Mucosa of descending colon (tissue), 3 donors: ENCODE measurements at regions of chr1 and their contacts with region 1.

Region 1: DNA sequence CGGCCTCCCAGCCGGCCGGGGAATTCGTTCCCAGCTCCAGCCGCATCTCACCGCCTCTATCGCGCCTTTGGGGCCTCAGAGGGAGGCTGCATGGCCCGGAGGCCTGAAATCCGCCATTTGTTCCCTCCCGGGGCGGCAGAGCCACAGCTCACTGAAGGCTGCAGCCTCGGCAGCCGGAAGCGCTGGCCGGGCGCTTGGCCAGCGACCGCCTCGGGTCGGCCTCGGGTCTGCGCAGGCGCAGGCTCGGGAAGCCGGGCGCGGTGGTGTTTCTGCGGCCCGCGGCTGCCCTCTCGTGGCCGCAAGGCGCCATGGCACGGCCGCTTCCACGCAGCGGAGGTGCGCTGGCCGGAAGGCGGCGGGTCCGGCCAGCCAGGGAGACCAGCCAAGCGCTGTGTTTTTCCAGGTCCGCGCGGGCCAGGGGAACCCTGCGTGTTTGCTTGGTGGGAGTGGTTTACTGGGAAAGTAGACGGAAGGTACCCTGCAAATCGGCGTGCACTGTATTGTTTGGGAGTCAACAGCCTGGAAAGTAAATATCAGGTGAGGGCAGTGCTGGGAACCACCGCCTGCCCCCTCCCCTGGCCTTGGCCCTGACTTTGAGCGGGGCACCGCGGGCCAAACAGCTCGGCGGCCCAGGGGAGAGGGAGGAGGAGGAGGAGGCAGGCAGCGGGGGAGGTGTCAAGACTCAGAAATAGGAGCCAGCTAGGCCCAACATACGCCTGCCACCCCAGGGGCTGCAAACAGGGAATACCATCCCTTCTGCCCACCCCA is 52.7 kb upstream of the CD34 start:
- DNase-seq: peak; percentile 91 to 96 (median 93)
- ATAC-seq: peak; percentile 97
- H3K4me3 ChIP-seq: peak overlapping the region; percentile 36
- H3K4me1 ChIP-seq: peaks cover 18% of the 10 kb centered on the region
- CTCF ChIP-seq: peak; percentile 100

Region 2: GRCh38 chr1:207828485-207829158 is 135.0 kb before region 1 on chr1:
- intact Hi-C with region 1: loop called in 1 of 2 experiments (anchors 5 kb)
- DNase-seq: peak; percentile 81 to 89 (median 89)
- ATAC-seq: peak; percentile 64
- H3K4me3 ChIP-seq: no peak overlapping the region
- H3K4me1 ChIP-seq: peaks cover 46% of the 10 kb centered on the region
- CTCF ChIP-seq: peak; percentile 78

Region 3: DNA sequence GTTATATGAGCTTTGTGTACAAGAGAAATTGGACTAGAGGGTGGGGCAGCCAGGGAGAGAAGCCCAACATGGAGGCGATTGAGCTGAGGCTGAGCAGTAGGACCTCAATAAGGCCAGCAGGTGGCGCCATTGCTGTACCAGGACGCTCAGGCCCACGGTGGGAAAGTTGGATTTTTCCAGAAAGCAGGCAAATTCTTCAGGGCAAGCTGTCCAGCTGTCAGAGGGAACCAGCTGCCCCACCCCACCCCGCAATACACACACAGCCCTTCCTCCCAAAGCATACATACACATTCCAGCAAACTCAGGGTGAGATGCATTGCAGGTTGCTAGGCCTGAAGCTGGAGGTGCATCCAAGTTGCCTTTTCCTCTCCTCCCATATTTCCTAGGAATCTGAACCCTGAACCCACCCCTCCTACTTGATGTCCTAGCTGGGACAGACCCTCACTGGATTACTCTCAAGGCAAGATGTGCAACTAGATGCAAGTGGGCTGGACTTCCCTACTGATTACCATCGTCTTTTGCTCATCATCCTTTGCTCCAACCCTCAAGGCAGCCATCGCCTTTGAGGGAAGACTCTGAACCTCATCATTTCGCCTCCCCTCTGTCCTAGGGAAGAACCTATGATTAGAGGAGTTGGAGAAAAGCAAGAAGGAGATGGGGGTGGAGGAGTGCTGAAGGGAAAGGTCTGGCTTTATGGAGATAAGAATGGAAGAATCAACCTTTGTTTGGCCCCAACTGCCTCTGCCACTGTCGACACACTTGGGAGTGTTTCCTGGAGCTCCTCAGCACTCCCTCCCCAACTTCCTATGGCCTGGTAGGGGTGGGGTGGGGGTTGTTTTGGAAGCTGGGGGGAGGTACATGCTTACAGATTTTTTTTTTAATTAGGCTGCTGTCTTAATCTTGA is 78.2 kb before region 1 on chr1:
- intact Hi-C with region 1: loop called in 1 of 2 experiments (anchors 5 kb)
- DNase-seq: peak; percentile 81 to 89 (median 83)
- ATAC-seq: peak; percentile 96
- H3K4me3 ChIP-seq: no peak overlapping the region
- H3K4me1 ChIP-seq: peaks cover 10% of the 10 kb centered on the region
- CTCF ChIP-seq: peak; percentile 91

Region 4: DNA sequence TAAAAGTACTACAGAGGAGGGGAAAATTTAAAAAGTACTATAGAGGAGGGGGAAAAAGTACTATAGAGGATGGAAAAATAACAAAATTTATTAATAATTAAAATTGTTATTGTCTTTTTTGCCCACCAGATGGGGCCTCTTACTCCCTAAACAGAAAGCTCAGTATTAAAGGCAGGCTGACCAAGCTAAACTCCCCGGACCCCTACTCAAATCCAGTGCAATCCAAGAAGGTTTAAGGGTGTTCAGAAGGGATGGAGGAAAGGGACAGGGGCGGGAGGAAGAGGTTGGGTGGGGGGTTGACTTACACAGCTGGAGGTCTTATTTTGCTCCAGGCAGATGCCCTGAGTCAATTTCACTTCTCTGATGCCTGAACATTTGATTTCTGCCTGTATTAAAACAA is 66.4 kb before region 1 on chr1:
- intact Hi-C with region 1: loop called in 1 of 2 experiments (anchors 5 kb)
- DNase-seq: no peak
- ATAC-seq: no peak
- H3K4me3 ChIP-seq: no peak overlapping the region
- H3K4me1 ChIP-seq: no peaks in the 10 kb centered on the region
- CTCF ChIP-seq: no peak